Activated CD8-positive, alpha-beta memory T cell treated with anti-CD3 and anti-CD28 coated beads, Interleukin-2, amount 10 ng/mL, durations not matched to agents 7 days and 5 days (primary cell): ENCODE measurements at regions of chr12 and their contacts with region 1.

Region 1: DNA sequence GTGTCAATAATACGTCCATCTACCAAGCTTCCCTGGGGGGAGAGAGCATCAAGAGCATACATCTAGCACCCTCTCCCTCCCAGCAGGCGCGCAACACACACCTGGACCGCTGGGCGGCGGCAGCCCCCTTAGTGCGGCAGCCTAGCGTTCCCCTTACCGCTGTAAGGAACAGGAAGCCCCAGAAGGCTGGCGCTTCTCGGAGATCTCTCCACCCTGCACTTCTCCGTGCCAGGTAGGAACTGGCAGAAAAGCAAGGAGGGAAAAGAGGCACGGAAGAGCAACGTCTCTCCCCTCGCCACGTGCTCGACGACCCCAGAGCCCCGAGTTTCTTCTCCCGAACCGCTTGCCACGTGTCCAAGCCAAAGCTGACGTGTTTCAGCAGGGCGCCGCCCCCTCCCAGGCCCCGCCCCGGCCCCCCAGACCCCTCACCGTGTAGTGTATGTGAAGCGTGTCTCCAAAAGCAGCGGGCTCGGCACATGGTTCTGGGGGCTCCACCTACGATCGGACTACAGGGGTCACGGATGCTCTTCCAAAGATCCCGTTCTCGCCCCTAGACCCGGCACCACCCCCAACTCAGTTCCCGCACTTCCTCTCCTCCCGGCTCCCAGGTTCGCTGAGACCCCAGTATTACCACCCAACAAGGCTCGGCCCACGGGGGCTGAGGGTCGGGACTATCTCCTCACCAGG is 532 bp downstream of the FKBP11 start:
- DNase-seq: peak; percentile 83
- ATAC-seq: peak; percentile 74
- H3K4me3 Mint-ChIP-seq: peak overlapping the region; percentile 92
- H3K27ac Mint-ChIP-seq: peak overlapping the region; percentile 95
- H3K4me1 Mint-ChIP-seq: peaks cover 43% of the 10 kb centered on the region
- H3K27me3 Mint-ChIP-seq: no peaks in the 10 kb centered on the region

Region 2: DNA sequence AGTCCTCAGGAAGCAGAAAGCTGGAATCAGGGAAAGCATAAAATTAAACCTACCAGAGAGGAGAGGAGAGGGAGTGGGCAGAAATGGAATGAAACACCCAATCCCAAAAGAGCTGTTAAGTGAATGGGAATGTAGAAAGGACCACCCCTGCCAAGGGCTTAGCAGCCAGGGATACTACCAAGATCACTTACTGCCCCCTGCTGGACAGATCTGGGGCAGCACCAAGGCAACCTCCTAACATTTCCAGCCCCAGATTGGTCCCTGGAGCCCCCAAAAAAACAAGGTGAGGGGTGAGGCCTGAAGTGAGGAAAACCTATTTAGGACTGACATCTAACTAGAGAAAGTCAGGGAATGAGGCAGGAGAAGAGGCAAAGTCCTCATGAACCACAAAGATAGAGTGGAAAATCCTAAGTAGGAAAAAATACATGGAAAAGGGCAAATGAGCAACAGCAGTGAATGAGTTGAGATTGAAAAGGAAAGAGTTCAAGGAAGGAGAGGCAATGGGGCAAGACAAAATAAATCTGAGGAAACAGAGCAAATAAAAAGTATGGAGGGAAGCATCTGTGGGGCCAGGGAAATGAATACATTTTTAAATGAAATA is 11.7 kb after region 1 on chr12:
- CTCF ChIA-PET with region 1: interaction called, 93 read pairs
- DNase-seq: peak; percentile 88
- ATAC-seq: peak; percentile 57
- H3K4me3 Mint-ChIP-seq: no peak overlapping the region
- H3K27ac Mint-ChIP-seq: peak overlapping the region; percentile 39
- H3K4me1 Mint-ChIP-seq: peaks cover 28% of the 10 kb centered on the region
- H3K27me3 Mint-ChIP-seq: no peaks in the 10 kb centered on the region

Region 3: GRCh38 chr12:48977315-48978281 is 52.8 kb after region 1 on chr12:
- CTCF ChIA-PET with region 1: interaction called, 65 read pairs
- DNase-seq: peak; percentile 81
- ATAC-seq: peak; percentile 62
- H3K4me3 Mint-ChIP-seq: peak overlapping the region; percentile 22
- H3K27ac Mint-ChIP-seq: no peak overlapping the region
- H3K4me1 Mint-ChIP-seq: peaks cover 55% of the 10 kb centered on the region
- H3K27me3 Mint-ChIP-seq: peaks cover 84% of the 10 kb centered on the region